Activated CD4-positive, alpha-beta memory T cell treated with anti-CD3 and anti-CD28 coated beads for 36 hours (primary cell): ENCODE measurements at regions of chr5 and their contacts with region 1.

Region 1: DNA sequence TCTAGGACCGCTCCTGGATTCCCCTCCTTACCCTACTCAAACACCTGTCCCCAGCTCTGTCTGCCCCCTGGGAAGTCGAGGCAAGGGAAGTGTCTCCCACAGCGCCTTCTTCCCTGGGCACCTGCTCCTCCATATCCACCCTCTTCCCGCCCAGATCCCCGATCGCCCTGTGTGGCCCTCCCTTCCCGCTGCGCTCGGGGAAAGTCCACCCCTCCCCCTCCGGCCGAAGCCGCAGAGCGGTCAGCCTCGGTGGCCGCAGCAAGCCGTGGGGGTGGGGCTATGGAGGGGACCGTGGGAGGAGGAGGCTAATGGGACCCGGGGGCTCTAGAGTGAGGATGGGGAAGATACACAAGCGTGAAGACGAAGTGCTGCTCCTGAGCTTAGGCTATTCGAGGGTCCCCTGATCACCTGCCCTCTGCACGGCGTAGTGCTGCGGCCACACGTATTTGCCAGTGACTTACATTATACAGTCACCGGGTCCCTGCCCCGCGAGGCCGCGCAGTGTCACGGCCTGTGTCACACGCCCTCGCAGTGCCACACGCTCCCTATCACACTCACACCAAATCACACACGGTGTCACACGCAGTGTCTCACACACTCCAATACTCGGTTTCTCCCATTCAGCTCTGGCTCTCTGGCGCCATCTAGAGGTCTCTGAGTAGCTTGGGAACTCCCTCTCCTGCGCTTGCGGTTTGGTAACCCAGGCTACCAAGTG is 658 bp upstream of the PCDH1 start:
- DNase-seq: peak; percentile 92
- H3K4me3 Mint-ChIP-seq: peak overlapping the region; percentile 59
- H3K27ac Mint-ChIP-seq: no peak overlapping the region
- H3K4me1 Mint-ChIP-seq: peaks cover 22% of the 10 kb centered on the region
- H3K27me3 Mint-ChIP-seq: peaks cover 73% of the 10 kb centered on the region

Region 2: DNA sequence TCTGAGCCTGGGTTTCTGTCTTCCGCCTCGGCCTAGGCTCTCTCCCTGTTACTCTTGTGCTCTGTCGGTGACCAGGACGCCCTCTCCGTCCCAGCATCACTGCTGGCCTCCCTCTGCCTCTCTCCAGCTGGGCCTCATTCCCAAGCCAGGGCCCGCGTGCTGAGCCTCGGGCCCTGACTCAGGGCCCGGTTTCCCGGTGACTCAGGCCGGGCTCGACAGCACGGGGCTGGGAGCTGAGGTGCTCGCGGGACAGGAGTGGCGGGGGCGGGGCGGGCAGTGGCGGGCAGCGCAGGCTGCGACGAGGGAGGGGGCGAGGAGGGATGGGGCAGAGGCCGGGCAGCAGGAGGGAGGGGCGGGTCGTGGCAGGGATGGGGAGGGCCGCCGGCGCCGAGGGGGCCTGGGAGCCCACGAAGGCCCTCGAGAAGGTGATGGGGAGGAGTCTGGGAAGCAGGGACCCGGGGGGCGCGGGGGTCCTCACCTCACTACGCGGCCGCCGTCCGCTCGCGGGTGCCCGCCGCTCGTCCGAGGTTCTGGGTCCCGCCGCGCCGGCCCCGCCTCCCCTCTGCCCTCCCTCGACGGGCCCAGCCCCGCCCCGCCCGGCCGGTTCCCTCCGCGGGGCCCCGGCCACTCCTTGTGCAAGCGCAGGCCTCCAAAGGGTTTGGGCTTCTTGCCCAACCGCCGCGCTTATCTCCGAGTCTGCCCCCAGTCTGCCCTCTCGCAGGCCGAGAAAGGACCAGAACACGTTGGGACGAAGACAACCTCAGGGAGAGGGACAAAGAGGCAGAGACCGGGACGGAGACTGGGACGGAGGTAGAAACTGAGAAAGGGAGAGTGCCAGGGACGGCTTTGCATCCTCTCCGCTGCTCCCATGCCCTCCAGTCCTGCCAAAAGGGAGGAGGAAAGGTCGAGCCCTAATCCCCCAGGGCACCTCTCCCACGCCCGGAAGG is 196.9 kb before region 1 on chr5 and contains the start of gene ARAP3:
- CTCF ChIA-PET with region 1: interaction called, 15 read pairs
- POLR2A ChIA-PET with region 1: no interaction called
- intact Hi-C with region 1: no loop called
- DNase-seq: peak; percentile 53
- H3K4me3 Mint-ChIP-seq: peak within 1 kb of the TSS; percentile 69
- H3K27ac Mint-ChIP-seq: peak within 1 kb of the TSS; percentile 68
- H3K4me1 Mint-ChIP-seq: peaks cover 19% of the 10 kb centered on the region
- H3K27me3 Mint-ChIP-seq: no peaks in the 10 kb centered on the region
- total RNA-seq, gene ARAP3: 5.1 to 5.2 TPM

Region 3: GRCh38 chr5:141811287-141812155 is 67.3 kb before region 1 on chr5:
- CTCF ChIA-PET with region 1: interaction called, 12 read pairs
- POLR2A ChIA-PET with region 1: no interaction called
- intact Hi-C with region 1: no loop called
- DNase-seq: peak; percentile 31
- H3K4me3 Mint-ChIP-seq: no peak overlapping the region
- H3K27ac Mint-ChIP-seq: no peak overlapping the region
- H3K4me1 Mint-ChIP-seq: no peaks in the 10 kb centered on the region
- H3K27me3 Mint-ChIP-seq: peaks cover 42% of the 10 kb centered on the region

Region 4: GRCh38 chr5:141858084-141858765 is 20.6 kb before region 1 on chr5:
- CTCF ChIA-PET with region 1: interaction called, 10 read pairs
- POLR2A ChIA-PET with region 1: no interaction called
- intact Hi-C with region 1: no loop called
- DNase-seq: no peak
- H3K4me3 Mint-ChIP-seq: no peak overlapping the region
- H3K27ac Mint-ChIP-seq: no peak overlapping the region
- H3K4me1 Mint-ChIP-seq: no peaks in the 10 kb centered on the region
- H3K27me3 Mint-ChIP-seq: peaks cover 5% of the 10 kb centered on the region

Region 5: DNA sequence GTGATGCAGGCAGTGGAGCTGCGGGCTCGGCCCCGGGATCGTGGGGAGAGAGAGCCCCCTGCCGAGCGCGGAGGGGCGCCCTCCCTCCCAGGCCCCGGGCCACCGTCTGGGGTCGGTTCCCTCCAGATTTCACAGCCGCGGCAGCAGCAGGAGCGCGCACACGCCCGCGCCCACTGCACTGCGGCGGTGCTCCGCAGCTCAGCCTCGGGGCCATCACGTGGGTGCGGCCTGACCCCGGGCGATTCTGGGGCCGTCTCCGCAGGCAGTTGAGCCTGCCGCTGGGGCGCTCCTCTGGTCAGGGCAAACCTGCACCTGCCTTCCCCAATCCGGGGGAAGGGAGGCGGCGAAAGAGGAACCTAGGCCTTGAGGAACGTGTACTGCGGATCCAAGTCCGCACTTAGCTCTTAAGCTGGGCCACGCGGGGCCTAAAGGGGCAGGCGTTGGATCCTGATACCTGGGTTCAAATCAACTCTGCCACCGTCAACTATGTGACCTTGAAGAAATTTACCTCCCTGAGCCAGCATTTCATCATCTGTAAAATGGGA is 35.4 kb after region 1 on chr5:
- CTCF ChIA-PET with region 1: interaction called, 22 read pairs
- POLR2A ChIA-PET with region 1: no interaction called
- intact Hi-C with region 1: no loop called
- DNase-seq: peak; percentile 25
- H3K4me3 Mint-ChIP-seq: no peak overlapping the region
- H3K27ac Mint-ChIP-seq: no peak overlapping the region
- H3K4me1 Mint-ChIP-seq: peaks cover 8% of the 10 kb centered on the region
- H3K27me3 Mint-ChIP-seq: peaks cover 22% of the 10 kb centered on the region

Region 6: GRCh38 chr5:141960449-141961202 is 81.8 kb after region 1 on chr5:
- CTCF ChIA-PET with region 1: interaction called, 92 read pairs
- POLR2A ChIA-PET with region 1: no interaction called
- intact Hi-C with region 1: loop called (anchors 2 kb)
- DNase-seq: peak; percentile 95
- H3K4me3 Mint-ChIP-seq: no peak overlapping the region
- H3K27ac Mint-ChIP-seq: peak overlapping the region; percentile 71
- H3K4me1 Mint-ChIP-seq: peaks cover 39% of the 10 kb centered on the region
- H3K27me3 Mint-ChIP-seq: no peaks in the 10 kb centered on the region